MCF 10A (cell line): ENCODE measurements at regions of chr6 and their contacts with region 1.

Region 1: DNA sequence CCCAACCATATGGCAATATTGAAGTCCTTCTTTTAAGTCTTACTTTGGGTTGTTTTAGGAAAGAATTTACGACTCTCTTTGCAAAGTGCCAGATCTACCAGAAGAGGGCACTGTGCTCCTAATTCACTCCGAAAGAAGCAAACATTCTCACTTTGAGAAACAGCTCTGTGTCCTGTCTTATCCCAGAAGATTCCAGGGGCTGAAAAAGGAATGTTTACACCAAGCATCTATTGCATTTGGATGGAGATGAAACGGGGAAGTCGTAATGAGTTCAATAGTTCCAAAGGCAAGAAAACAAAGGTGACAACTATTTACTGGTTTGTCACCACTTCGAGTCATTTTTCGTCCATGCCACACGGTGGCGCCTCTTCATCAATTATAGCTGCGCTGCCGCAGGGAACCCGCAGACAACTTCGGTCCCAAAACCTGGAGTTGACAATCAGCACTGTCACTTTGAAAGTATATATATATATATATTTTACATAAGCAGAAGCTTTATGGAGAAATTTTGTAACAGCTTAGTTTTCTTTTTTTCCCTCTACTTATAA is 121.6 kb downstream of the MOXD1 start:
- DNase-seq: peak; percentile 77
- H3K4me3 Mint-ChIP-seq: peak overlapping the region; percentile 71
- H3K27ac Mint-ChIP-seq: no peak overlapping the region
- H3K4me1 Mint-ChIP-seq: no peaks in the 10 kb centered on the region
- H3K27me3 Mint-ChIP-seq: no peaks in the 10 kb centered on the region
- CTCF ChIP-seq: peak; percentile 76

Region 2: DNA sequence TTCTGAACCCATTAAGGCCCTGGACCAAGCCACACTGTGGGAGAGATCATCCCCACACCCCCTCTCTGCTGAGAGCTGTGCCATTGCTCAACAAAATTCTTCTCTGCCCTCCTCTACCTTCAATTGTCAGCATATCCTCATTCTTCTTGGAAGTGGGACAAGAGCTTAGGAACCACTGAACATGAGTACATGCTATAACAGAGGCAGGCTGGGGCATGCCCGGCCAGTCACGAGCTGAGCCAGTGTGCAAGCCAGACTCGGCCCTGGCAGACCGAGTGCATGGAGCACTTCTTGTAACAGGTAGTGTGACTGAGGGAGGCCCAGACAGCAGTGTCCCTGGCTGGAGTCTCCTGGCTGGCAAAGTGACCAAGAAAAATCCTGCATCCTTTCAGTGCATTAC is 27.6 kb before region 1 on chr6:
- CTCF ChIA-PET with region 1: interaction called, 16 read pairs
- POLR2A ChIA-PET with region 1: no interaction called
- intact Hi-C with region 1: no loop called
- DNase-seq: peak; percentile 60
- H3K4me3 Mint-ChIP-seq: no peak overlapping the region
- H3K27ac Mint-ChIP-seq: peak overlapping the region; percentile 57
- H3K4me1 Mint-ChIP-seq: peaks cover 11% of the 10 kb centered on the region
- H3K27me3 Mint-ChIP-seq: no peaks in the 10 kb centered on the region
- CTCF ChIP-seq: no peak

Region 3: GRCh38 chr6:132391391-132392271 is 112.0 kb after region 1 on chr6:
- CTCF ChIA-PET with region 1: interaction called, 27 read pairs
- POLR2A ChIA-PET with region 1: no interaction called
- intact Hi-C with region 1: no loop called
- DNase-seq: peak; percentile 68
- H3K4me3 Mint-ChIP-seq: no peak overlapping the region
- H3K27ac Mint-ChIP-seq: no peak overlapping the region
- H3K4me1 Mint-ChIP-seq: peaks cover 29% of the 10 kb centered on the region
- H3K27me3 Mint-ChIP-seq: no peaks in the 10 kb centered on the region
- CTCF ChIP-seq: no peak

Region 4: DNA sequence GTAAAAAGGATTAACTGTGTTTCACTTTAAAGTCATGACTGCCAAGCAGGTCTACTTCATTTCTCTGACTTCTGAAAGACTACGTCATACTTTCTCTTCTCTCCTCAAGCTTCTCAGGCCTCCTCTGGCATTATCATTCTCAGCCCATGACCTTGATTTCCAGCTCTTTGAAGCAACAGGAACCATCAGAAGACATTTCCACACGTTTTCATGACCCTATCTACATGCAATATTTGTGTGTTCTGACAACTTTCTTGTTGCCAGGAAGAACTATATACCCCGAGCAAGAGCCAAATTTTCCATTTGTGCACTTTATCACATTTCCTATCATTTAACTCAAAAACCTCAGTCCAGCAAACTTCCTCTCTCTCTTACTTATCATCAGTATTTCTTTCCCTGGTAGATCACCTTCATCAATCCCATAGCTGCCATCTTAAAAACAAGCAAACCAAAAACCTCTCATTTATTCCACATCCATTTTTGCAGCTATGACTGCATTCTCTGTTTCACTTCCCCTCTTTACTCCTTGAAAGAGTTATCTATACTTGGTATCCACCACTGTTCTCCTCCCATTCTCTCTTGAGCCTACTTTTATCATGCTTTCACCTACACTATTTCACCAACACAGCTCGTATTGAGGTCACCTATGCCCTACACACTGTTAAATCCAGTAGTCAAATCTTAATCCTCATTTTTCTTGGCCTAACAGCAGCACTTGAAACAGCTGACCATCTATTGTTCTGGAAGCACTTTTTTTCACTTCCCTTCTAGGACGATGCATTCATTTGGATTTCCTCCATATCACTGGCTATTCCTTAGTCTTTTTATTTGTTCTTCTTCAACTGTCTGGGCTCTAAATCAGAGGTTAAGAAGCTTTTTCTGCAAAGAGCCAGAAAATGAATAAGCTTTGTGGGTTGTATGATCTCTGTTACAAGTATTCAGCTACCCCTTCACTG is 186.1 kb after region 1 on chr6:
- CTCF ChIA-PET with region 1: interaction called, 30 read pairs
- POLR2A ChIA-PET with region 1: no interaction called
- intact Hi-C with region 1: no loop called
- DNase-seq: no peak
- H3K4me3 Mint-ChIP-seq: no peak overlapping the region
- H3K27ac Mint-ChIP-seq: no peak overlapping the region
- H3K4me1 Mint-ChIP-seq: no peaks in the 10 kb centered on the region
- H3K27me3 Mint-ChIP-seq: no peaks in the 10 kb centered on the region
- CTCF ChIP-seq: no peak

Region 5: GRCh38 chr6:132495604-132496079 is 216.0 kb after region 1 on chr6:
- CTCF ChIA-PET with region 1: interaction called, 119 read pairs
- POLR2A ChIA-PET with region 1: no interaction called
- intact Hi-C with region 1: no loop called
- DNase-seq: no peak
- H3K4me3 Mint-ChIP-seq: no peak overlapping the region
- H3K27ac Mint-ChIP-seq: no peak overlapping the region
- H3K4me1 Mint-ChIP-seq: peaks cover 14% of the 10 kb centered on the region
- H3K27me3 Mint-ChIP-seq: no peaks in the 10 kb centered on the region
- CTCF ChIP-seq: no peak